ENCODE measurements at regions of chr21 and their contacts with region 1.

Region 1: GRCh38 chr21:32278518-32279376 is at the start of gene MIS18A:
- DNase-seq: peak; percentile 85 to 92 (median 90)
- H3K4me3 ChIP-seq: peak within 1 kb of the TSS; percentile 72 to 100 (median 89)
- H3K27ac ChIP-seq: peak within 1 kb of the TSS in 58 of 59 donors; percentile 17 to 93 (median 80)
- H3K27me3 ChIP-seq: no peaks in the 10 kb centered on the region
- CTCF ChIP-seq: peak in 46 of 56 donors; percentile 11 to 73 (median 42)
- total RNA-seq, gene MIS18A: 4.5 to 12.7 (median 7.2) TPM

Region 2: DNA sequence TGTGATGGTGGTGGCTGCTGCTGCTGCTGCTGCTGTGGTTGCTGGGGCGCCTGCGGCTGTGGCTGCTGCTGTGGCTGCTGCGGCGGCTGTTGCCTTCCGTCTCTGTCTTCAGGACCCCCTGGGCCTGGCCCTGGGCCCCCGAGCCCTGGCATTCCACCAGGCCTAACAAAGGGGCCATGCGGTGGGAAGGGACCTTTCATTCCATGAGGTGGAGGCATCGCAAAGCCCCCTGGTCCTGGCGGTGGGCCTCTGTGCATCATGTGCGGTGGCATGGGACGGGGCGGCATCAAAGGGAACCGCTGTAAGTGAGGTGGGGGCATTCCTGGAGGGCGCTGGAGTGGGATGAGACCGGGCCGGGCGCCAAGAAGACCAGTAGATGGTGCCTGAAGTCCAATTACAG is 606.8 kb before region 1 on chr21:
- intact Hi-C with region 1: loop called in 1 of 2 experiments (anchors 10 kb)
- DNase-seq: no peak
- H3K4me3 ChIP-seq: no peak overlapping the region
- H3K27ac ChIP-seq: peak overlapping the region in 1 of 59 donors; percentile 16
- H3K27me3 ChIP-seq: no peaks in the 10 kb centered on the region
- CTCF ChIP-seq: no peak

Region 3: GRCh38 chr21:32207406-32207716 is 71.4 kb before region 1 on chr21:
- intact Hi-C with region 1: no loop called
- DNase-seq: no peak
- H3K4me3 ChIP-seq: no peak overlapping the region
- H3K27ac ChIP-seq: no peak overlapping the region
- H3K27me3 ChIP-seq: no peaks in the 10 kb centered on the region
- CTCF ChIP-seq: no peak

Region 4: GRCh38 chr21:32334980-32335531 is 56.3 kb after region 1 on chr21:
- intact Hi-C with region 1: loop called in 1 of 2 experiments (anchors 2 kb)
- DNase-seq: peak in 9 of 10 donors; percentile 47 to 81 (median 68)
- H3K4me3 ChIP-seq: peak overlapping the region in 56 of 59 donors; percentile 7 to 65 (median 43)
- H3K27ac ChIP-seq: peak overlapping the region; percentile 82 to 99 (median 96)
- H3K27me3 ChIP-seq: no peaks in the 10 kb centered on the region
- CTCF ChIP-seq: no peak

Region 5: GRCh38 chr21:32392880-32393676 is 114.3 kb after region 1 on chr21 and contains the start of gene URB1:
- intact Hi-C with region 1: loop called in 1 of 2 experiments (anchors 5 kb)
- DNase-seq: peak; percentile 89 to 98 (median 91)
- H3K4me3 ChIP-seq: peak within 1 kb of the TSS; percentile 61 to 100 (median 95)
- H3K27ac ChIP-seq: peak within 1 kb of the TSS in 49 of 59 donors; percentile 7 to 90 (median 75)
- H3K27me3 ChIP-seq: no peaks in the 10 kb centered on the region
- CTCF ChIP-seq: peak in 3 of 56 donors; percentile 8 to 27 (median 25)
- total RNA-seq, gene URB1: 16.2 to 31.0 (median 22.1) TPM

Region 6: GRCh38 chr21:32569261-32570230 is 290.8 kb after region 1 on chr21:
- intact Hi-C with region 1: loop called in 1 of 2 experiments (anchors 10 kb)
- DNase-seq: peak in 9 of 10 donors; percentile 47 to 76 (median 68)
- H3K4me3 ChIP-seq: peak overlapping the region; percentile 49 to 88 (median 64)
- H3K27ac ChIP-seq: peak overlapping the region in 40 of 59 donors; percentile 20 to 86 (median 57)
- H3K27me3 ChIP-seq: no peaks in the 10 kb centered on the region
- CTCF ChIP-seq: peak; percentile 58 to 91 (median 80)